PC-9 (cell line): ENCODE measurements at regions of chr3 and their contacts with region 1.

Region 1: GRCh38 chr3:184800349-184800930 is 11.5 kb upstream of the VPS8 start:
- DNase-seq: no peak
- H3K4me3 ChIP-seq: no peak overlapping the region
- H3K27ac ChIP-seq: no peak overlapping the region
- H3K4me1 ChIP-seq: peaks cover 5% of the 10 kb centered on the region; the same call in 1 of the 2 replicates
- H3K27me3 ChIP-seq: peaks cover 22% of the 10 kb centered on the region; the same call in 1 of the 2 replicates
- CTCF ChIP-seq: no peak

Region 2: GRCh38 chr3:184651904-184652303 is 148.5 kb before region 1 on chr3:
- CTCF ChIA-PET with region 1: interaction called, 19 read pairs
- POLR2A ChIA-PET with region 1: no interaction called
- intact Hi-C with region 1: no loop called
- DNase-seq: peak; percentile 72 to 75
- H3K4me3 ChIP-seq: no peak overlapping the region
- H3K27ac ChIP-seq: peak overlapping the region; percentile 62
- H3K4me1 ChIP-seq: peaks cover 22% of the 10 kb centered on the region
- H3K27me3 ChIP-seq: no peaks in the 10 kb centered on the region
- CTCF ChIP-seq: no peak